HCT116 (cell line): ENCODE measurements at regions of chr1 and their contacts with region 1.

Region 1: DNA sequence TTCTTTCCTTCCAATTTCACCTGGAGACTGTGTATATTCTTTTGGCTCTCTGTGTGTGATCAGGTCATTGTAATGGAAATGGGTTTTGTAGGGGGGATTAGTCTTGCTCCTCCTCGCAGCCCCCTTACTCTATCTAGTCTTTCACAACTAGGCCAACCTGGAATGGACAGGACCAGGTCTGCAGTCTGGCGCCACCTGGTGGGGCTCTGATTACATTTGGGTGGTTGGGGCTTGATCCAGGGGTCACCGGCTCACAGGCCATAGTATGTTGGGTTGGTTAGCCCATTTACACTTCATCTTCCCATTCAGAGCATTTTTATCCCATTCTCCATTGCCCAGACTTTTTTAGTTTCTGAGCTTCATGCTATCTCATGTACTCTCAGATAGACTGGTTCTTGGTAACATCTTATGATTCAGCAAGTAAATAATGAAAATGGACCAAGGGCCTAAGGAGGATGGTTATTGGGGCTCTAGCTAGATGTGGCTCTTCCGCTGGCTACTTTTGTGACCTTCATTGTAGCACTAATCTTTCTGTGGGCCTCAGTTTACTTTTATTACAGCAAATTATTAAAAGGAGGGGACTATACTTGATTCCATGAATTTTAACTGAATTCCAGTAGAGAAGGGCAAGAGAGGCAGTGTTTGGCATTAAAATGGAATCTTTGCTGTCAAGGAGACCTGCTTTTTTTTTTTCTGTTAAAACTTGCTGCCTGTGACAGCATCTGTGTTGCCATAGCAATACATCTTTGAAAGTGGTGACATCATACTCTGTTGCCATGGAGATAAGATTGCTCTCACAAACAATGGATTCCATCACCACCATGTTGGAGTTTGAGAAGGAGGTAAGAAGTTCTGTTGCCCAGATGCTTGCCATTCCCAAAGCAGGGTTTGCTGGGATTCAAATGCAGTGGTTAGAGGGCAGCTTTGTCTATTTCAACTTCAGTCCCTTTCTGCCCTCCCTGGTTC is 150.1 kb downstream of the PLXNA2 start:
- DNase-seq: peak; percentile 31
- ATAC-seq: peak; percentile 95
- H3K4me3 ChIP-seq: no peak overlapping the region
- H3K27ac ChIP-seq: no peak overlapping the region
- H3K4me1 ChIP-seq: no peaks in the 10 kb centered on the region
- H3K27me3 ChIP-seq: no peaks in the 10 kb centered on the region
- CTCF ChIP-seq: peak; percentile 67 to 94 (median 85); a peak in 5 of 6 replicates
- POLR2A ChIP-seq: no peak
- RAD21 ChIP-seq: peak; percentile 60

Region 2: GRCh38 chr1:208036109-208036808 is 57.8 kb before region 1 on chr1:
- CTCF ChIA-PET with region 1: no interaction called
- POLR2A ChIA-PET with region 1: no interaction called
- RAD21 ChIA-PET with region 1: no interaction called
- intact Hi-C with region 1: loop called (anchors 1 kb)
- DNase-seq: peak; percentile 18
- ATAC-seq: peak; percentile 89
- H3K4me3 ChIP-seq: no peak overlapping the region
- H3K27ac ChIP-seq: no peak overlapping the region
- H3K4me1 ChIP-seq: no peaks in the 10 kb centered on the region
- H3K27me3 ChIP-seq: no peaks in the 10 kb centered on the region; the same call in none of the 2 replicates
- CTCF ChIP-seq: peak; percentile 35 to 49 (median 43); a peak in 5 of 6 replicates
- POLR2A ChIP-seq: no peak
- RAD21 ChIP-seq: peak; percentile 44

Region 3: GRCh38 chr1:208107425-208108212 is 13.6 kb after region 1 on chr1:
- CTCF ChIA-PET with region 1: no interaction called
- POLR2A ChIA-PET with region 1: no interaction called
- RAD21 ChIA-PET with region 1: no interaction called
- intact Hi-C with region 1: no loop called
- DNase-seq: no peak
- ATAC-seq: peak; percentile 71
- H3K4me3 ChIP-seq: no peak overlapping the region
- H3K27ac ChIP-seq: no peak overlapping the region
- H3K4me1 ChIP-seq: peaks cover 0 to 11% of the 10 kb centered on the region in 2 experiments; a peak in 2 of 4 replicates
- H3K27me3 ChIP-seq: peaks cover 11% of the 10 kb centered on the region
- CTCF ChIP-seq: no peak
- POLR2A ChIP-seq: no peak
- RAD21 ChIP-seq: no peak